HCT116 (cell line): ENCODE measurements at regions of chr6 and their contacts with region 1.

Region 1: DNA sequence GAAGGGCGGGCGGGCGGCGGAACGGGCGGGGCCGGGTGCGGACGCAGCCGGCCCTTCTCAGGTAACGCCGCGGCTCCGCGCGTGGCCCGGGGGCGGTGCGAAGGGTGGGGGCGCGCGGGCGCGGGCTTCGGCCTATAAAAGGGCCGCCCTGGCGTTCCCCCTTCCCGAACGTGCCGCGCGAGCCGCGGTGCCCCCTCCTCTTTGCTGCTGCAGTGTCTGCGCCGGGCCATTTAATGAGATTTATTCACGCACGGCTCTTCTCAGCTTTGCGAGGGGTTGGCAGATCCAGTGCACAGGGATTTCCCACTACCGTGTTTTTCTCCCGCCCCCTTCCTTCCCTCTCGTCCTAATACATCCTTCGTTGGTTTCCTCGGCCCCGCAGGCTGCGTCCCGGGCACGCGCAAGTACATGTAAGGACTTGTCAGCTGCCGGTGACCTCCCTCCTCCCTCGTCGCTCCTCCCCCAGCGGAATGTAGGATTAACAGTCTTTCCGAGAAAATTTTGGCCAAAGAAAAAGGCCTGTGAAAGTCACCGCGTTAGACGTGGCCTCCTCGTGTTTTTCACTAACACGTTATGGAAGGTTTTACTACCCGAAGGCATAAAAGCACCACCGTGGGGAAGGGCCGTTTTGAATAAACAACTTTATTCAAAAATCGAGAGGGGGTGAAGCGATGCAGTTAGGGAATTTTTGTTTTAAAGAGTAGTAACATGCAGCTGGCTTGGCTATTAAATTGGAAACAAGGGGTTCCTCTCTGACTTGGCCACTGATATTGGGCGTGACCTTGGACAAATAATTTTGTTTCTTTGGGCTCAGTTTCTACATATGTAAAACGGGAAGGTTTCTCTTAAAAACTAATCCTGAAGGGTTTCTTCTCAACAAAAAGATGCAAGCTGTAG is 966 bp upstream of the REV3L start:
- DNase-seq: peak; percentile 72
- ATAC-seq: peak; percentile 79
- H3K4me3 ChIP-seq: peak overlapping the region; percentile 68 to 85
- H3K27ac ChIP-seq: peak overlapping the region; percentile 86
- H3K4me1 ChIP-seq: peaks cover 18 to 33% of the 10 kb centered on the region in 2 experiments
- H3K27me3 ChIP-seq: no peaks in the 10 kb centered on the region
- CTCF ChIP-seq: no peak
- POLR2A ChIP-seq: peak; percentile 96
- RAD21 ChIP-seq: no peak; the same call in 1 of the 2 replicates

Region 2: DNA sequence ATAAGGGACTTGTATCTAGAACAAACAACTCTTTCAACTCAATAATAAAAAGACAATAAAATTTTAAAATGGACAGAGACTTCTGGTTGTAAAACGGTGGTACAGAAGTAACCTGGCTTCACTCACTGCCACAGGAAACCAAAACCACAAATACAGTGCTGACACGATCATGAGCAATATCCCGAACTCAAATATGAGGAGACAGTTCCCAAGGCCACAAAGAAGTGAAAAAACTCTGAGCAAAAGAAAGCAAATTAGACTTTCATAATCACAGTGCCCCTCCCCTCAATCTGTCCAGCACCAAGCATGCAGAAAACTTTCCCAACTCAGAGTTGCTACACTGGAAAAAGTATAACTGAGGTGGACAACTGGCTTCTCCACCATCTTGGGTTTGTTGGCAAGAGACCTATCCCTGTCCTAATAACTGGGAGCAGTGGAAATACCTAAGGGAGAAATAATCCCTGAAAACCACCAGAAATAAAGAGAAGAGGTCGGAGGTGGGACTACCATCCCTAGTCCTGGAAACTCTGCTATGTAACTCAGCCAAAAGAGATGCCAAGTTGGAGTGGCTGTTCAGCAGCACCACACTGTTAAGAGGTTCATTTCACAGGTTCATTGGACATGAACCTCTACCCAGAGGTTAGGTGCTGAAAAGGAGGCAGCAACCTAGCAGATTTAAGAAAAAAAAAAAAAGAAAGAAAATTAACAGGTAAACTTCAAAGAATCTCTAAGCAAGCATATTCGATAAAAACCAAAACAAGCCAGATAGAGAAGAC is 56.5 kb before region 1 on chr6:
- CTCF ChIA-PET with region 1: no interaction called
- POLR2A ChIA-PET with region 1: no interaction called
- RAD21 ChIA-PET with region 1: no interaction called
- intact Hi-C with region 1: no loop called
- DNase-seq: no peak
- ATAC-seq: no peak
- H3K4me3 ChIP-seq: no peak overlapping the region
- H3K27ac ChIP-seq: no peak overlapping the region
- H3K4me1 ChIP-seq: peaks cover 2 to 23% of the 10 kb centered on the region in 2 experiments; a peak in 1 of 4 replicates
- H3K27me3 ChIP-seq: no peaks in the 10 kb centered on the region
- CTCF ChIP-seq: no peak
- POLR2A ChIP-seq: no peak
- RAD21 ChIP-seq: no peak

Region 3: GRCh38 chr6:111591104-111591900 is 107.3 kb after region 1 on chr6:
- CTCF ChIA-PET with region 1: interaction called, 3 read pairs
- POLR2A ChIA-PET with region 1: no interaction called
- RAD21 ChIA-PET with region 1: no interaction called
- intact Hi-C with region 1: loop called (anchors 1 kb)
- DNase-seq: peak; percentile 92
- ATAC-seq: peak; percentile 86
- H3K4me3 ChIP-seq: peak overlapping the region in 1 of 2 experiments; percentile 25; a peak in 2 of 4 replicates
- H3K27ac ChIP-seq: peak overlapping the region; percentile 68
- H3K4me1 ChIP-seq: peaks cover 44 to 56% of the 10 kb centered on the region in 2 experiments
- H3K27me3 ChIP-seq: no peaks in the 10 kb centered on the region
- CTCF ChIP-seq: no peak
- POLR2A ChIP-seq: no peak
- RAD21 ChIP-seq: peak; percentile 38

Region 4: GRCh38 chr6:111605100-111605751 is 121.2 kb after region 1 on chr6:
- CTCF ChIA-PET with region 1: no interaction called
- POLR2A ChIA-PET with region 1: interaction called, 3 read pairs
- RAD21 ChIA-PET with region 1: no interaction called
- intact Hi-C with region 1: loop called (anchors 5 kb)
- DNase-seq: no peak
- ATAC-seq: peak; percentile 56
- H3K4me3 ChIP-seq: peak overlapping the region; percentile 65 to 75
- H3K27ac ChIP-seq: peak overlapping the region; percentile 85
- H3K4me1 ChIP-seq: peaks cover 17 to 38% of the 10 kb centered on the region in 2 experiments
- H3K27me3 ChIP-seq: no peaks in the 10 kb centered on the region
- CTCF ChIP-seq: no peak
- POLR2A ChIP-seq: no peak
- RAD21 ChIP-seq: no peak

Region 5: GRCh38 chr6:111888928-111889695 is 405.1 kb after region 1 on chr6:
- CTCF ChIA-PET with region 1: no interaction called
- POLR2A ChIA-PET with region 1: no interaction called
- RAD21 ChIA-PET with region 1: no interaction called
- intact Hi-C with region 1: no loop called
- DNase-seq: no peak
- ATAC-seq: no peak
- H3K4me3 ChIP-seq: no peak overlapping the region
- H3K27ac ChIP-seq: no peak overlapping the region
- H3K4me1 ChIP-seq: no peaks in the 10 kb centered on the region
- H3K27me3 ChIP-seq: no peaks in the 10 kb centered on the region
- CTCF ChIP-seq: no peak
- POLR2A ChIP-seq: no peak
- RAD21 ChIP-seq: no peak